Activated CD8-positive, alpha-beta T cell treated with anti-CD3 and anti-CD28 coated beads, Interleukin-2, amount 10 ng/mL, durations not matched to agents 7 days and 5 days (primary cell): ENCODE measurements at regions of chr1 and their contacts with region 1.

Region 1: GRCh38 chr1:172895050-172895460 is 155.7 kb downstream of the TNFSF18 start:
- DNase-seq: peak; percentile 62
- ATAC-seq: peak; percentile 91
- H3K4me3 Mint-ChIP-seq: peak overlapping the region; percentile 70
- H3K27ac Mint-ChIP-seq: peak overlapping the region; percentile 93
- H3K4me1 Mint-ChIP-seq: peaks cover 49% of the 10 kb centered on the region
- H3K27me3 Mint-ChIP-seq: peaks cover 1% of the 10 kb centered on the region

Region 2: GRCh38 chr1:172833954-172834353 is 61.1 kb before region 1 on chr1:
- CTCF ChIA-PET with region 1: no interaction called
- POLR2A ChIA-PET with region 1: no interaction called
- DNase-seq: no peak
- ATAC-seq: no peak
- H3K4me3 Mint-ChIP-seq: no peak overlapping the region
- H3K27ac Mint-ChIP-seq: no peak overlapping the region
- H3K4me1 Mint-ChIP-seq: peaks cover 70% of the 10 kb centered on the region
- H3K27me3 Mint-ChIP-seq: peaks cover 2% of the 10 kb centered on the region

Region 3: GRCh38 chr1:172883107-172883791 is 11.8 kb before region 1 on chr1:
- CTCF ChIA-PET with region 1: interaction called, 35 read pairs
- POLR2A ChIA-PET with region 1: interaction called, 11 read pairs
- DNase-seq: no peak
- ATAC-seq: peak; percentile 51
- H3K4me3 Mint-ChIP-seq: peak overlapping the region; percentile 25
- H3K27ac Mint-ChIP-seq: peak overlapping the region; percentile 7
- H3K4me1 Mint-ChIP-seq: peaks cover 31% of the 10 kb centered on the region
- H3K27me3 Mint-ChIP-seq: peaks cover 11% of the 10 kb centered on the region

Region 4: GRCh38 chr1:172906778-172907592 is 11.9 kb after region 1 on chr1:
- CTCF ChIA-PET with region 1: interaction called, 10 read pairs
- POLR2A ChIA-PET with region 1: interaction called, 5 read pairs
- DNase-seq: peak; percentile 38
- ATAC-seq: peak; percentile 90
- H3K4me3 Mint-ChIP-seq: peak overlapping the region; percentile 26
- H3K27ac Mint-ChIP-seq: peak overlapping the region; percentile 84
- H3K4me1 Mint-ChIP-seq: peaks cover 33% of the 10 kb centered on the region
- H3K27me3 Mint-ChIP-seq: peaks cover 2% of the 10 kb centered on the region

Region 5: GRCh38 chr1:172990598-172991215 is 95.7 kb after region 1 on chr1:
- CTCF ChIA-PET with region 1: no interaction called
- POLR2A ChIA-PET with region 1: no interaction called
- DNase-seq: no peak
- ATAC-seq: no peak
- H3K4me3 Mint-ChIP-seq: no peak overlapping the region
- H3K27ac Mint-ChIP-seq: no peak overlapping the region
- H3K4me1 Mint-ChIP-seq: no peaks in the 10 kb centered on the region
- H3K27me3 Mint-ChIP-seq: no peaks in the 10 kb centered on the region